ENCODE measurements at regions of chr14 and their contacts with region 1.

Region 1: GRCh38 chr14:49892636-49893308 is at the start of gene ARF6:
- DNase-seq: peak; percentile 97
- H3K4me3 Mint-ChIP-seq: peak within 1 kb of the TSS; percentile 97
- H3K27ac Mint-ChIP-seq: peak within 1 kb of the TSS; percentile 99
- H3K4me1 Mint-ChIP-seq: peaks cover 22% of the 10 kb centered on the region
- H3K27me3 Mint-ChIP-seq: no peaks in the 10 kb centered on the region
- total RNA-seq, gene ARF6: 160 to 165 TPM

Region 2: DNA sequence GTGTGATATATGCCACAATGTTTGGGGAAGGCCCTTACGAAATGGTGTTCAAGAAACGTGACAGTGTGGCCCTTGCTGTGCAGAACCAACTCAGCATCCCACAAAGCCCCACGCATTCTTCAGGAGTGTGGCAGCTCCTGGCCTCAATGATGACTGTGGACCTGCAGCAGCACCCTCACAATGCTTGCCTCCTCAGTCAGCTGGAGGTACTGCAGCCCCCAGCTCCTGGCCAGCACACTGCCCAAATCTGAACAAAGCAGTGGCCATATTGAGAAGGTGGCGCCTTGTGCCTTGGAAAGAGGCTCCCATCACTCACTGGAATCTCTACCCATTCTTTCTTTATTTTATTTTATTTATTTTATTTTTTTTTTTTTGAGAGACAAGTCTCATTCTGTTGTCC is 215.1 kb before region 1 on chr14:
- CTCF ChIA-PET with region 1: no interaction called
- POLR2A ChIA-PET with region 1: no interaction called
- DNase-seq: no peak
- H3K4me3 Mint-ChIP-seq: no peak overlapping the region
- H3K27ac Mint-ChIP-seq: no peak overlapping the region
- H3K4me1 Mint-ChIP-seq: peaks cover 9% of the 10 kb centered on the region
- H3K27me3 Mint-ChIP-seq: no peaks in the 10 kb centered on the region

Region 3: GRCh38 chr14:49879683-49880204 is 13.0 kb before region 1 on chr14:
- CTCF ChIA-PET with region 1: interaction called, 17 read pairs
- POLR2A ChIA-PET with region 1: no interaction called
- DNase-seq: peak; percentile 63
- H3K4me3 Mint-ChIP-seq: no peak overlapping the region
- H3K27ac Mint-ChIP-seq: peak overlapping the region; percentile 71
- H3K4me1 Mint-ChIP-seq: peaks cover 30% of the 10 kb centered on the region
- H3K27me3 Mint-ChIP-seq: peaks cover 4% of the 10 kb centered on the region

Measured in activated CD4-positive, alpha-beta T cell treated with anti-CD3 and anti-CD28 coated beads, Interleukin-2, amount 10 ng/mL, durations not matched to agents 7 days and 5 days (primary cell).